Colonic mucosa (tissue), 4 donors: ENCODE measurements at regions of chr1 and their contacts with region 1.

Region 1: DNA sequence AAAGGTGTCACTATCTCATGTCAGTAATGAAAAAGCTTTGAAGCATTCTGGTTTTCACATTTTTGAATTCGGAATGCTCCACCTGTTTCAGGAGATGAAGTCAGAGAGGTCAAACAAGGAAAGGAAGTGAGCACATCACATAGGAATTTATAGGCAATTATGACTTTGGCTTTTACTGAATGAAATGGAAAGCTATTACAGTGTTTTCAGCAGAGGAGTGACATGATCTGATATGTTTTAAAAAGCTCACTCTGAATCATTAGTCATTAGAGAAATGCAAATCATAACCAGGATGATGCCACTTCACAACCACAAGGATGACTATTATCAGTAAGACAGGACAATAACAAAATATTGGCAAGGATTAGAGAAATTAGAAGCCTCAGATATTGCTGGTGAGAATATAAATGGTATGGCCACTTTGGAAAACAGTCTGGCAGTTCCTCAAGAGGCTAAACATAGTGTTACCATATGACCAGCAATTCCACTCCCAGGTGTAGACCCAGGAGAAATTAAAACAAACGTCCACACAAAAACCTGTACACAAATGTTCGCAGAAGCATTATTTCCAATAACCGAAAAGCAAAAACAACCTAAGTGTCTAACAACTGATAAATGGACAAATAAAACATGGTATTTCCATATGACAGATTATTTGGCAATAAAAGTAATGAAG is 7.5 kb downstream of the TAF1A start:
- DNase-seq: no peak
- H3K4me3 ChIP-seq: no peak overlapping the region
- H3K27ac ChIP-seq: no peak overlapping the region
- H3K4me1 ChIP-seq: no peaks in the 10 kb centered on the region
- H3K27me3 ChIP-seq: no peaks in the 10 kb centered on the region
- CTCF ChIP-seq: no peak

Region 2: DNA sequence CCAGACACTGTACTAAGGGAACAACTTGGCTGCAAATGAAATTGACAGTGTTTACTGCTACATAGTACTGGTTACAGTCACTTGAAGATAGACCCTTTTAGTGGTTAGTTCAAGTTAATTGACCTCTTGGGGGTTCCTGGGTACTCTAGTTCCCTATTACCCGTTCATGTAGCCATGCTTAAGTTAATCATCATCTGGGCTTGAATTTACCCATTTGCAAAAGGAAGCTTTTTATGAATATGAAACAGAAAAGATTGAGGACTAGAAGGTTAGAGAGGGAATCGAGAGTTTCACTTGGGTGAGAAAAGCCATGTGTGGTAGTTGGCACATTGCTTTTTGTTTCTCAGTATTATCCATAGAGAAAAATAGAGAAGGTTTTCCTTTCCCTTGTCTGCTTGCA is 38.3 kb after region 1 on chr1:
- intact Hi-C with region 1: loop called (anchors 5 kb)
- DNase-seq: no peak
- H3K4me3 ChIP-seq: no peak overlapping the region
- H3K27ac ChIP-seq: no peak overlapping the region
- H3K4me1 ChIP-seq: no peaks in the 10 kb centered on the region
- H3K27me3 ChIP-seq: no peaks in the 10 kb centered on the region
- CTCF ChIP-seq: no peak